ENCODE measurements at regions of chr6 and their contacts with region 1.

Region 1: DNA sequence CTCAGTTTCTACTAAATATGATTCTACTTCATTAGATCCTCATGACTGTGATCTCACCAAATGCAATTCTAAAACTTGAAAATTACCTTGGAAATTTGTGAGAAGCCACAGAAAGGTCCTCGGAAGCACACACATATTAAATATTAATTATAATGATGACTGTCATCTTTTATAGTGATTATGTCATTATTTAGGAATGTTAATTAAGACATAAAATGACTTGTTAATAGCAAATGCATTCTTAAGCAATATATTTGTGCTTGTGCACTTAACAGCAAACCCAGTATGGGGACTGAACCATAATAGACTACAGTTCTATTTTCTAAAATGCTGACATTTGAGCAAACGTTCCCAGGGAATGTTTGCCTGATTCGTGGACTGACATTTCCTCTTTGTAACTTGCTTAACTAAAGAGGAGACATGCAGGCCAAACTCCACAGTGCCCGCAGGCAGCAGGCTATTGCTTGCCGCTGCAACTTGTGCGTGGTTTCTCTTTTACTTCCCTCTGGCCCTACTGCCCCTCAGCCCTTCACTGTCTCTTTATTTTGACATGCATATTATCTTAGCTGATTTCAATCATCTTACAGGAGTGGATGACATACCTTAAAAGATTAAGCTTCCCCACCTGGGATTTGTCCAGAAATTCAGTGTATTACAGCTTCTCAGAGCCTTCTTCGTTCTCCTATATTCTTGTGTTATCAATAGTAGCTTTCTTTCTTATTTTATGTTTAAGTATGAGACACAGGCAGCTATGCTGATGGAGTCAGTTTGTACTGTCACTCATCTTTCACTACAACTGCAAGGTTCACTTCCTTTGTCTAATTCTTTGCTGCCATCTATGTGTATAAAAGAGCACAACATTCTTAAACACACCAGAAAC is 141.5 kb downstream of the GMDS start:
- DNase-seq: no peak
- H3K4me3 ChIP-seq: no peak overlapping the region
- H3K27ac ChIP-seq: no peak overlapping the region
- H3K4me1 ChIP-seq: no peaks in the 10 kb centered on the region
- H3K27me3 ChIP-seq: no peaks in the 10 kb centered on the region
- CTCF ChIP-seq: peak in 1 of 3 experiments; percentile 52
- POLR2A ChIP-seq: no peak

Region 2: DNA sequence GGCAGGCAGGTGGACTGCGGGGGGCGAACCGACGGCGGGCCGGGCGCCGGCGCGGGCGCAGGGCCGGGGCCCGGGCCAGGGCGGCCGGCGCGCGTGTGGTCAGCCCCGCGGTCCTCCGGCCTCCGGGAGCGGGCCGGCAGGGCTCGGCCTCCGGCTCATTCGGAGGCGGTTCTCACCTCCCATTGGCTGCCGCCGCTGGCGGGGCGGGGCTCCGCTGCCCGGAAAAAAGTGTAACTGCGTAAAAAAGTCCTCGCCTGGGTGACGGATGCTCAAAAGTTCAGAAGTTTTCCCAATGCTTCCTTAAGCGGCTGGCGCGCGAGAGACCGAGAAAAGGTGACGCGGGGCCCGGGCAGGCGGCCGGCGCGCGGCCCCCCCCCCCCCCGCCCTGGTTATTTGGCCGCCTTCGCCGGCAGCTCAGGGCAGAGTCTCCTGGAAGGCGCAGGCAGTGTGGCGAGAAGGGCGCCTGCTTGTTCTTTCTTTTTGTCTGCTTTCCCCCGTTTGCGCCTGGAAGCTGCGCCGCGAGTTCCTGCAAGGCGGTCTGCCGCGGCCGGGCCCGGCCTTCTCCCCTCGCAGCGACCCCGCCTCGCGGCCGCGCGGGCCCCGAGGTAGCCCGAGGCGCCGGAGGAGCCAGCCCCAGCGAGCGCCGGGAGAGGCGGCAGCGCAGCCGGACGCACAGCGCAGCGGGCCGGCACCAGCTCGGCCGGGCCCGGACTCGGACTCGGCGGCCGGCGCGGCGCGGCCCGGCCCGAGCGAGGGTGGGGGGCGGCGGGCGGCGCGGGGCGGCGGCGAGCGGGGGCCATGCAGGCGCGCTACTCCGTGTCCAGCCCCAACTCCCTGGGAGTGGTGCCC is 494.0 kb before region 1 on chr6 and contains the start of gene FOXC1:
- intact Hi-C with region 1: loop called (anchors 5 kb)
- DNase-seq: peak; percentile 89
- H3K4me3 ChIP-seq: peak within 1 kb of the TSS; percentile 64 to 76
- H3K27ac ChIP-seq: peak within 1 kb of the TSS; percentile 86 to 97
- H3K4me1 ChIP-seq: peaks cover 4% of the 10 kb centered on the region
- H3K27me3 ChIP-seq: no peaks in the 10 kb centered on the region
- CTCF ChIP-seq: no peak
- POLR2A ChIP-seq: peak; percentile 29
- total RNA-seq, gene FOXC1: 9.4 to 10.6 TPM

Region 3: GRCh38 chr6:2008383-2008976 is 95.4 kb before region 1 on chr6:
- intact Hi-C with region 1: no loop called
- DNase-seq: no peak
- H3K4me3 ChIP-seq: no peak overlapping the region
- H3K27ac ChIP-seq: no peak overlapping the region
- H3K4me1 ChIP-seq: no peaks in the 10 kb centered on the region
- H3K27me3 ChIP-seq: no peaks in the 10 kb centered on the region
- CTCF ChIP-seq: no peak
- POLR2A ChIP-seq: no peak

Region 4: DNA sequence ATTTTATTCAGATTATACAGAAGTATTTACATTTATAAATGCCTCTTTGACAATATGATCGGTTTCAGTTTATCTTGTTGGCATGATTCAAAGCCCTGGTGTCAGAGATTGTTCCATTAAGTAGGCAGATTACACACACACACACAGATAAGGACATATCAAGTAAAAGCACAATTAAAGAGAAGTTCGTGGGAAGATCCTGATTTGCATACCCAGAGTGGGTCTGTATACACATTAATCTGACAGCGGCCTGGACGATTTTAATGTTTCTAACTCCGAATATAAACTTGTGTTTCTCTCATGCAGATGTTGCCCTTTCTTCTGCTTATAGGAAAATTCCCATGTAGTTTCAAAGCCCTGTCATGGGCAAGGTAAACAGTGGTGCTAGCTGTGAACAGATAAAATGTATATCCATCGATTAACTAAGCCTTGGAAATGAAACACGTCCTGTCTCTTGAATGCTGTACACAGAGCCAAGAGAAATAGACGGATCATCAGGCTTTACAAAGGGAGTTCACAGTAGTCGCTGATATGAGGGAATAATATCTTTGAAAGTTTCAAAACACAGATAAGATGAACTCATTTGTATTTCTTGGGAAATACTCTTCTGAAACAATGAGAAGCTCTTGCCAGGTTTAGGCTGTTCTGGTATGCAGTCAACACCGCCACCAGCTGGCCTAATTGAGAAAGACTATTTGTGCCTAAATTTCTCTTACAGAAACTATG is 249.7 kb after region 1 on chr6:
- intact Hi-C with region 1: no loop called
- DNase-seq: peak; percentile 84
- H3K4me3 ChIP-seq: no peak overlapping the region
- H3K27ac ChIP-seq: no peak overlapping the region
- H3K4me1 ChIP-seq: no peaks in the 10 kb centered on the region
- H3K27me3 ChIP-seq: no peaks in the 10 kb centered on the region
- CTCF ChIP-seq: peak; percentile 66 to 88 (median 85)
- POLR2A ChIP-seq: no peak

Measured in testis (tissue), 5 donors.